ENCODE measurements at regions of chr2 and their contacts with region 1.

Region 1: GRCh38 chr2:110677530-110678456 is at the start of gene BUB1:
- DNase-seq: peak; percentile 88 to 98
- H3K4me3 ChIP-seq: peak within 1 kb of the TSS; percentile 63 to 83
- H3K27ac ChIP-seq: peak within 1 kb of the TSS; percentile 79 to 92
- H3K4me1 ChIP-seq: peaks cover 0 to 6% of the 10 kb centered on the region in 2 donors
- H3K27me3 ChIP-seq: no peaks in the 10 kb centered on the region
- CTCF ChIP-seq: no peak
- total RNA-seq, gene BUB1: not detected

Region 2: GRCh38 chr2:110717734-110718133 is 39.9 kb after region 1 on chr2:
- intact Hi-C with region 1: loop called (anchors 5 kb)
- DNase-seq: peak in 1 of 2 donors; percentile 80
- H3K4me3 ChIP-seq: no peak overlapping the region
- H3K27ac ChIP-seq: no peak overlapping the region
- H3K4me1 ChIP-seq: peaks cover 3 to 19% of the 10 kb centered on the region in 2 donors
- H3K27me3 ChIP-seq: no peaks in the 10 kb centered on the region
- CTCF ChIP-seq: no peak

Region 3: DNA sequence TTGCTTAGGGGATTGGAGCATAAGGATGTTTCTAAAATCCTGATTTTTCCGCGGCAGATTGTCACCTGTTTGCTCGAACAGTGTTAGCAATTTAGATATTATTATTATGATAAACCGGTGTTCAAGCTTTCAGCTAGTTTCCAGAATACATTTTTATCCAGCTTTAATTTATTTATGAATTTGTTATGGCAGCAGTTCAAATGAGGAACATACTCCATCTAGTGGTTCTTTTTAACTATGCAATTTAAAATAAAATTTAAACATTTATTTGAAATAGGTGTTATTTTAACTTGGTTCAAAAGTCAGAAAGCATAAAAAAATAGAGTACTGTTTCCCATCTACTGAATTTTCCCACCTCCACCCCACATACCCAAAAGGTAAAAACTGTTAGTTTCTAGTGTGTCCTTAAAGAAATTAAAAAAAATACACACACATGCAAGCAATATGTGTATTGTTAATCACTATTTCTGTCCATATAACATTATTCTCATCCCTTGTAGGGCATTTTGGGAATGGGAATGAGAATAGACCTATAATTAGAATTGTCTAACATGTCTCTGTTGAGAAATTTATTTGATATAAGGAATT is 77.8 kb after region 1 on chr2:
- intact Hi-C with region 1: loop called (anchors 2 kb)
- DNase-seq: no peak
- H3K4me3 ChIP-seq: no peak overlapping the region
- H3K27ac ChIP-seq: no peak overlapping the region
- H3K4me1 ChIP-seq: no peaks in the 10 kb centered on the region
- H3K27me3 ChIP-seq: no peaks in the 10 kb centered on the region
- CTCF ChIP-seq: peak; percentile 28 to 72 (median 54)

Region 4: GRCh38 chr2:110886826-110887573 is 209.2 kb after region 1 on chr2:
- intact Hi-C with region 1: no loop called
- DNase-seq: no peak
- H3K4me3 ChIP-seq: no peak overlapping the region
- H3K27ac ChIP-seq: no peak overlapping the region
- H3K4me1 ChIP-seq: no peaks in the 10 kb centered on the region
- H3K27me3 ChIP-seq: no peaks in the 10 kb centered on the region
- CTCF ChIP-seq: no peak

Region 5: DNA sequence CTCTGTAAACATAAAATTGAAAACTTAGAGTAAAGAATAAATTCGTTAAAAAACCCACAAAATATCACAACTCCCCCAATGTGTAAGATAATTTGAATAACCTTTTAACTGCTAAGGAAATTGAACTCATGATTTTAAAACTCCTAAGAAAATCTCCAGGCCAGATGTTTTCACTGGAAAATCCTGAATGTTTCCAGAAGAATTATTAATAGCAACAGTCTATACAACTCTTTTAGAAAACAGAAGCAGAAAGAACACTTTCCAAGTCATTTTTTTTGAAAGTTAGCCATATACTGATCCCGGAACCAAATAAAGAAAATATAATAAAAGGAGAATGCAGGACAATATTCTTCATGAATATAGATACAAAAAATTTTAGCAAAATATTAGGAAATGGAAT is 220.2 kb after region 1 on chr2:
- intact Hi-C with region 1: no loop called
- DNase-seq: no peak
- H3K4me3 ChIP-seq: no peak overlapping the region
- H3K27ac ChIP-seq: no peak overlapping the region
- H3K4me1 ChIP-seq: no peaks in the 10 kb centered on the region
- H3K27me3 ChIP-seq: no peaks in the 10 kb centered on the region
- CTCF ChIP-seq: no peak

Measured in ascending aorta (tissue), 2 donors.